ENCODE measurements at regions of chr2 and their contacts with region 1.

Region 1: DNA sequence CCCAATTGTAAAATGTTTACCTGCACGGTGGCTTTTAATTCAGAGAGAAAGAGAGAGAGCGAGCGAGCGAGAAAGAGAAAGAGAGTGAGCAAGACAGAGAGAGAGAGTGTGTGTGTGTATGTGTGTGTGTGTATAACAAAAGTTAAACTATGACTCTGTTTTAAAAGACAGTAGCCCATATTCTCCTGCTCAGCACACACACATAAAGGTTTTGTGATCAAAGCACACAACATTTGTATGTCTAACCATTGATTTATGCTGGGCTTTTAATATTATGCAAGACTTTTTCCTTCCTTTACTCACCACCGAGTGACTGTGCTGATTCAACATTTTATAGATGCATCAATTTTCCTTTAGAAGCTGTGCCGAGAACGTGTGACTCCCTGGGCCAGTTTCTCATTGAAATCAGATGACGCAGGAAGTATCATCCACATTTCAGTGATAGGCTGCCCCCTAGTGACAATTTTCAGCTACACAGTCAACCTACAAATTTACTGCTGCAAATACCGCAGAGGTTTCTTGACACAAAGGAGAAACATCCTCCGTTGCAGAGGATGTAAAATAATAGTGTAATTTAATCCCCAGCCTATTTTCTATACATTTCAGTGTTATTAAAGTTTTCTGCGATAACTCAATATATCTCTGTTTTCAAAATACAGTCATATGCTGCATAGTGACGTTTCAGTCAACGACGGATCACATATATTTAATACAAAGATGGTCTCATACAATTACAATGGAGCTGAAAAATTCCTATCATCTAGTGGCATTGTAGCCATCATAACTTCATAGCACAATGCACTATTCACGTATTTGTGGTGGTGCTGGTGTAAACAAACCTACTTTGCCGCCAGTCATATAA is 165.9 kb upstream of the TANK start:
- DNase-seq: peak; percentile 66
- ATAC-seq: peak; percentile 92
- H3K4me3 ChIP-seq: peak overlapping the region in 2 of 3 experiments; percentile 6 to 31; a peak in 3 of 6 replicates
- H3K27ac ChIP-seq: no peak overlapping the region
- H3K4me1 ChIP-seq: peaks cover 9% of the 10 kb centered on the region
- H3K27me3 ChIP-seq: no peaks in the 10 kb centered on the region; a peak in 1 of 5 replicates
- CTCF ChIP-seq: peak; percentile 89
- EP300 ChIP-seq: no peak
- POLR2A ChIP-seq: no peak
- RAD21 ChIP-seq: peak; percentile 81

Region 2: DNA sequence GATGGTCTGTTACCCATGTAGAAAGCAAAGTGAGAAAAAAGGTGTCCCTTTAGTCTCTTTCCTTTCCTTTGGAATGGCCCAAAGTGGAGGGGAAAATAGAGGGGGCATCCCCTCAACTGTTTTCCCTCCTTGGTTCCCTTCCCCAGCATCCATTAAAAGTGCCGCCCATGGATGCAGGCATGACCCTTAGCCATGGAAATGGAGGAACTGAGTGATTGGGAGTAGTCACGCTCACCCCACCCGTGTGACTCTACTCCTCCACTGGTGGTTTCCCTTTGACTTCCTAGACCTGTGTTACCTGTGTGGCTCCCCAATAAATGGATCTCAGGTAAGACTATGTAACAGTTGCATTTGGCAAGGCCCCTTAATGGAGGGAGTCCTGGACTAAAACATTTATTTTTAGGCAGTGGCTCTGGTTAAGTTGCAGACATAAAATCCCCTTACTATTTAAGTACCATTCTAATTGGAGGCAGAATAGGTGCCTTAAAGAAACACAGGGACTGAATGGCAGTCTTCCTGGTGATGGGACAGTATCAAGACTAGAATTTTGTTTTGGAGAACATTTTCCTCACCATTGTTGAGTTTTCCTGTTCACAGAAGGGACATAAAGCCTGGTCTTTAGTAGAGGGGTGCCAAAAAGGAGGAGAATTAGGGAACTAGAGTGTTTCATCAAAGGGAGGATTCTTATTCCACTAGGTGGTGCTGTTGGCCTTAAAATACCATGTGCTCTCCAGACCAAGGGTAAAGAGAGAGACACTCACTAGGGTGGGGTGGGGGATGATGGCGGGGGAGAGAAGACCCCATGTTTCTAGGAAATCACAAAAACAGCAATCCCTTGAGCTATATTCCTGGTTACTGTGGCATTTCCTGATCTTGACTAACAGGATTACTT is 906.3 kb before region 1 on chr2:
- CTCF ChIA-PET with region 1: interaction called, 7 read pairs
- POLR2A ChIA-PET with region 1: no interaction called
- in situ Hi-C with region 1: no loop called
- intact Hi-C with region 1: loop called (anchors 1 kb)
- DNase-seq: peak; percentile 30
- ATAC-seq: peak; percentile 83
- H3K4me3 ChIP-seq: no peak overlapping the region
- H3K27ac ChIP-seq: no peak overlapping the region
- H3K4me1 ChIP-seq: no peaks in the 10 kb centered on the region
- H3K27me3 ChIP-seq: no peaks in the 10 kb centered on the region; a peak in 1 of 5 replicates
- CTCF ChIP-seq: peak; percentile 54
- EP300 ChIP-seq: no peak
- POLR2A ChIP-seq: no peak
- RAD21 ChIP-seq: no peak; the same call in 1 of the 2 replicates

Region 3: DNA sequence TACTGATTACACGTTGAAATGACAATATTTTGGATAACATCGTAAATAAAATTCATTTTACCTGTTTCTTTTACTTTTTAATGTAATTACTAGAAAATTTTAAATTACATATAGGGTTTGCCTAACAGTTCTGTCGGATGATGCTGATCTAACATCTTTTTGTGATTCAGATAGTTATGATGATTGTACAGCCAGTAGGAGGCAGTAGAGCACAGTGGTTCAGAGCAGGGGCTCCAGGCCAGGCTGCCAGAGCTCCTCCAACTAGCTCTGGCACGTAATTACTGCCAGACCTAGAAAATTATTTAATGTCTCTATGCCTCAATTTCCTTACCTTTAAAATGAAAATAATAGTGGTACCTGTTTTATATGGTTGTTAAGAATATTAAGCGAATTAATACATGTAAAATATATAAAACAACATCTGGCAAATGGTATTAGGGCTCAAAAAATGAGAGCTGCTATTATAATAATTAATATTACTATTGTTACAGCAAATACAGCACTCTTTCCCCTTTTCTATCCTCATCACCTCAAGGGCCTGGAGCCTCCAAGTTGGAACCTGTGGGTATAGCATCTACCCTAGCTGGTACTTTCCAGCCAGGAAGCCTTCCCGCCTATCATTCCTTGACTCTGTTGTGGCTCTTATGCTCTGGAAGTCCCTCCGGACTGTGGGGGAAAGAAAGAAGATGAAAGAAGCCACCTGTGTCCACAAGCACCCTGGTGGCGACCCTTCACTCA is 884.3 kb before region 1 on chr2:
- CTCF ChIA-PET with region 1: interaction called, 9 read pairs
- POLR2A ChIA-PET with region 1: no interaction called
- in situ Hi-C with region 1: loop called (anchors 10 kb)
- intact Hi-C with region 1: loop called (anchors 1 kb)
- DNase-seq: peak; percentile 62
- ATAC-seq: peak; percentile 97
- H3K4me3 ChIP-seq: no peak overlapping the region
- H3K27ac ChIP-seq: no peak overlapping the region
- H3K4me1 ChIP-seq: no peaks in the 10 kb centered on the region
- H3K27me3 ChIP-seq: peaks cover 0 to 8% of the 10 kb centered on the region in 2 experiments; a peak in 1 of 5 replicates
- CTCF ChIP-seq: peak; percentile 88
- EP300 ChIP-seq: no peak
- POLR2A ChIP-seq: no peak
- RAD21 ChIP-seq: peak; percentile 86

Region 4: GRCh38 chr2:160252278-160252887 is 742.0 kb before region 1 on chr2:
- CTCF ChIA-PET with region 1: interaction called, 16 read pairs
- POLR2A ChIA-PET with region 1: no interaction called
- in situ Hi-C with region 1: no loop called
- intact Hi-C with region 1: loop called (anchors 1 kb)
- DNase-seq: peak; percentile 22
- ATAC-seq: peak; percentile 41; the same call in 2 of the 3 replicates
- H3K4me3 ChIP-seq: no peak overlapping the region
- H3K27ac ChIP-seq: no peak overlapping the region
- H3K4me1 ChIP-seq: no peaks in the 10 kb centered on the region
- H3K27me3 ChIP-seq: no peaks in the 10 kb centered on the region
- CTCF ChIP-seq: peak; percentile 73
- EP300 ChIP-seq: no peak
- POLR2A ChIP-seq: no peak
- RAD21 ChIP-seq: no peak

Region 5: GRCh38 chr2:160317181-160318099 is 676.9 kb before region 1 on chr2:
- CTCF ChIA-PET with region 1: no interaction called
- POLR2A ChIA-PET with region 1: no interaction called
- in situ Hi-C with region 1: no loop called
- intact Hi-C with region 1: loop called (anchors 2 kb)
- DNase-seq: no peak
- ATAC-seq: no peak
- H3K4me3 ChIP-seq: no peak overlapping the region
- H3K27ac ChIP-seq: no peak overlapping the region
- H3K4me1 ChIP-seq: peaks cover 20% of the 10 kb centered on the region
- H3K27me3 ChIP-seq: no peaks in the 10 kb centered on the region
- CTCF ChIP-seq: no peak
- EP300 ChIP-seq: no peak
- POLR2A ChIP-seq: no peak
- RAD21 ChIP-seq: no peak

Region 6: DNA sequence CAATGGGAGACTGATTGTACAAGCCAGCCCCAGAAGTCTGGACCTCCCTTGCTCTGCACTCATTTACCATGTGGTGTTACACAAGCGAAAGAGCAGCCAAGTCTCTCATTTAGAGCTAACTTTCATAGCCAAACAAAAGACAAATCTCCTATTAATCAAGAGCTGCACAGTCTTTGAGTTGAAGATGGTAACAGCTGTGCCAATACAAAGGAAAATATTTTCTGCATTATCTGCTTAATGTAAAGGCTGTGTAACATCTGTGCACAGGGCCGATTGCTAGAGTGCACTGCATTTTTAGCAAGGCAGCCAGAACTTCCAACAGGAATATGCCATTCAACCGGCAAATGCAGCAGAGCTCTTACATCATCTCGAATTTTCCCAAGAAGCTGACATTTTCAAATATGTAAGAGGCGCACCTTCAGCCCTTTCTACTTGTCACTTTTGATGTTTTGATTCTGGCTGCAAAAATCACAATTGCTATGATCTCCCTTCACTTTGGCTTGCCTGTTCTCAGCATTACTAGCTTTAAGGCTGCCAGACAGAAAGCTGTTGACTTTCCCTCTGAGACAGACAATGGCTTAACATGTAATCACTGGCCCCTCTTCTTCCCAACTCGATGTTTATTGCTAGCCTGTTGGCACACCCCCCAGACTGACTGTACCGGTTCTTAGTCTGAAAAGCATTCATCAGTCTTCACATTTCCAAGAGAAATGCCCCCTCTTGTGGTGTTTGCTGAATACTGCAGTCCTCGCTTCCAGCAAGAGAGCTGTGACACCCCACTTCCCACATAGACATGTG is 69.0 kb after region 1 on chr2:
- CTCF ChIA-PET with region 1: no interaction called
- POLR2A ChIA-PET with region 1: no interaction called
- in situ Hi-C with region 1: no loop called
- intact Hi-C with region 1: loop called (anchors 5 kb)
- DNase-seq: peak; percentile 74
- ATAC-seq: peak; percentile 98
- H3K4me3 ChIP-seq: no peak overlapping the region
- H3K27ac ChIP-seq: no peak overlapping the region
- H3K4me1 ChIP-seq: peaks cover 8% of the 10 kb centered on the region; the same call in 1 of the 2 replicates
- H3K27me3 ChIP-seq: no peaks in the 10 kb centered on the region
- CTCF ChIP-seq: peak; percentile 91
- EP300 ChIP-seq: no peak
- POLR2A ChIP-seq: no peak
- RAD21 ChIP-seq: peak; percentile 62